Right cardiac atrium (tissue), 5 donors: ENCODE measurements at regions of chr3 and their contacts with region 1.

Region 1: GRCh38 chr3:42749753-42750231 is 23.3 kb downstream of the CCDC13 start:
- DNase-seq: no peak
- ATAC-seq: peak; percentile 7 to 19
- H3K4me3 ChIP-seq: no peak overlapping the region
- H3K27ac ChIP-seq: no peak overlapping the region
- H3K4me1 ChIP-seq: peaks cover 15% of the 10 kb centered on the region
- H3K27me3 ChIP-seq: no peaks in the 10 kb centered on the region

Region 2: GRCh38 chr3:42387802-42388651 is 361.8 kb before region 1 on chr3:
- intact Hi-C with region 1: no loop called
- DNase-seq: no peak
- ATAC-seq: no peak
- H3K4me3 ChIP-seq: no peak overlapping the region
- H3K27ac ChIP-seq: no peak overlapping the region
- H3K4me1 ChIP-seq: no peaks in the 10 kb centered on the region
- H3K27me3 ChIP-seq: no peaks in the 10 kb centered on the region

Region 3: GRCh38 chr3:42581709-42582473 is 167.9 kb before region 1 on chr3 and contains the start of gene SEC22C:
- intact Hi-C with region 1: loop called in 1 of 4 experiments (anchors 10 kb)
- DNase-seq: peak; percentile 95 to 98 (median 98)
- ATAC-seq: peak; percentile 99
- H3K4me3 ChIP-seq: peak within 1 kb of the TSS; percentile 63
- H3K27ac ChIP-seq: peak within 1 kb of the TSS; percentile 34
- H3K4me1 ChIP-seq: no peaks in the 10 kb centered on the region
- H3K27me3 ChIP-seq: no peaks in the 10 kb centered on the region
- total RNA-seq, gene SEC22C: 24.9 to 29.9 (median 28.4) TPM

Region 4: GRCh38 chr3:42600111-42600988 is 149.4 kb before region 1 on chr3 and contains the start of gene NKTR:
- intact Hi-C with region 1: loop called in 1 of 4 experiments (anchors 10 kb)
- DNase-seq: peak; percentile 96 to 99 (median 99)
- ATAC-seq: peak; percentile 96 to 97
- H3K4me3 ChIP-seq: peak within 1 kb of the TSS; percentile 76
- H3K27ac ChIP-seq: peak within 1 kb of the TSS; percentile 93
- H3K4me1 ChIP-seq: no peaks in the 10 kb centered on the region
- H3K27me3 ChIP-seq: no peaks in the 10 kb centered on the region
- total RNA-seq, gene NKTR: 27.7 to 35.8 (median 29.5) TPM

Region 5: DNA sequence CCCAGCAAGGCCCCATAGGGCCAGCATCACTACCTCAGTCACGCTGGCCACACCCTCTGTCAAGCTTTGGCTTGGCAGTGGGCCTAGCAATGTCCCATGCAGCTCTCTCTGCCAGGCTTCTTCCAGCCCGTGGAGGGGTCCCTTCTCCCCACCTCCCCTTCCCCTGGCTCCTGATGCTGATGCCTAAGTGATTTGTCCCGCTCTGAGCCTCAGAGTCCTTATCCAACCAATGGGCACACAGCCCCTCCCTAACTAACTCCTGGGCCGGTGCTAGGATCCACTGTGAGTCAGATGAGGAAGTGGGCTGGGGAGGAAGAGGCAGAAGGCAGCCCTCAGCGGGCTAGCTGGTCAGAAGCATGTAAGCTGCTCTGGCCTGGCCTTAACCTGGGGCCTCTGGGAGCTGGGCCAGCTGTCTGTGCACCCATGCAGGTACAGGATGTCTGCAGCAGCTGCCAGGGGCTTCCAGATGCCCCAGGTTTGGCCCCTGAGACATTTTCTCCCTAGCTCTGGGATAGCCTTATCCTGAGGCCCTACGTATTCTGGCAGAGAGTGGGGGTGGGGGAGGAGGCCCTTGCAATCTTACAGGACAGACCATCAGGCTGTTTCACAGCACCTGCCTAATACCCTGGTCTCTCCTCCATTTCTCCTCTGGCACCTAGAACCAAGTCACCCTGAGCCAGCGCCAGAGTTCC is 97.0 kb before region 1 on chr3:
- intact Hi-C with region 1: loop called in 3 of 4 experiments (anchors 2 to 10 kb)
- DNase-seq: peak; percentile 73 to 84 (median 80)
- ATAC-seq: peak; percentile 40 to 66
- H3K4me3 ChIP-seq: peak overlapping the region; percentile 82
- H3K27ac ChIP-seq: peak overlapping the region; percentile 72
- H3K4me1 ChIP-seq: peaks cover 18% of the 10 kb centered on the region
- H3K27me3 ChIP-seq: no peaks in the 10 kb centered on the region

Region 6: GRCh38 chr3:42660893-42661292 is 88.9 kb before region 1 on chr3:
- intact Hi-C with region 1: loop called in 3 of 4 experiments (anchors 5 to 10 kb)
- DNase-seq: peak in 2 of 3 donors; percentile 79 to 81
- ATAC-seq: peak; percentile 22 to 41
- H3K4me3 ChIP-seq: no peak overlapping the region
- H3K27ac ChIP-seq: peak overlapping the region; percentile 76
- H3K4me1 ChIP-seq: no peaks in the 10 kb centered on the region
- H3K27me3 ChIP-seq: no peaks in the 10 kb centered on the region